Colonic mucosa (tissue), 4 donors: ENCODE measurements at regions of chr7 and their contacts with region 1.

Region 1: GRCh38 chr7:25389489-25390106 is 161.3 kb upstream of the NPVF start:
- DNase-seq: peak; percentile 60
- H3K4me3 ChIP-seq: no peak overlapping the region
- H3K27ac ChIP-seq: no peak overlapping the region
- H3K4me1 ChIP-seq: peaks cover 11% of the 10 kb centered on the region
- H3K27me3 ChIP-seq: no peaks in the 10 kb centered on the region
- CTCF ChIP-seq: peak; percentile 48

Region 2: DNA sequence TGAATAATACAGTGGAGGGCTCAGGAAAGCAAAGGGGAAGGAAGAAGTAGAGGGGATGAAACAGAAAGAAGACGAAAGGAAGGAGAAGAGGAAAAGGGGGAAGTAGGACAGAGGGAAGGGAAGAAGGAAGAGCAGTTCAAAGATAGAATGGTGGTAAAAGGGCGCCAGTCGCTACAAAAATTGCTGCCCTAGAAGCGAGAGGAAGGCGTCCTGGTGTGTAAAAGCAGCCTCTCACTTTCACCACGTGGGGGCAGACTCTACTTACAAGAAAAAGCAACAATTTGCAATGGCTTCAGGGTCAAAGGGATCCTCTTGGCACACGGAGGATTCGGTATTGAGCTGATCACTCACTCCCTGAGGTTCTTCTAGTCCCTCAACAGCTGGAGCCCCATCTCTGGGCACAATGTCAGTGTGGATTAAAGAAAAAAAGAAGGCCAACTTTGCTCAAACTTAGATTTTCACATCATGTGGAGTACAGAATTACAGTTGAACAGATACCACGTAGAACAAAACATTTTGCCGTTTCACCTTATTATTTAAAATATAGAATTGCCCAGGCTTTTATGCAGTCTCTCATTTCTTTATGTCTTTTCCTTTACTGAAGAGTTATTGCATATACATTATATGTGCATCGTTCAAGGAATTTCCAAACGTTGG is 129.9 kb before region 1 on chr7:
- intact Hi-C with region 1: loop called (anchors 1 kb)
- DNase-seq: peak; percentile 82
- H3K4me3 ChIP-seq: no peak overlapping the region
- H3K27ac ChIP-seq: no peak overlapping the region
- H3K4me1 ChIP-seq: peaks cover 9% of the 10 kb centered on the region
- H3K27me3 ChIP-seq: no peaks in the 10 kb centered on the region
- CTCF ChIP-seq: peak; percentile 86

Region 3: GRCh38 chr7:25314731-25315267 is 74.8 kb before region 1 on chr7:
- intact Hi-C with region 1: loop called (anchors 10 kb)
- DNase-seq: peak; percentile 59
- H3K4me3 ChIP-seq: no peak overlapping the region
- H3K27ac ChIP-seq: peak overlapping the region; percentile 75
- H3K4me1 ChIP-seq: no peaks in the 10 kb centered on the region
- H3K27me3 ChIP-seq: no peaks in the 10 kb centered on the region
- CTCF ChIP-seq: no peak

Region 4: DNA sequence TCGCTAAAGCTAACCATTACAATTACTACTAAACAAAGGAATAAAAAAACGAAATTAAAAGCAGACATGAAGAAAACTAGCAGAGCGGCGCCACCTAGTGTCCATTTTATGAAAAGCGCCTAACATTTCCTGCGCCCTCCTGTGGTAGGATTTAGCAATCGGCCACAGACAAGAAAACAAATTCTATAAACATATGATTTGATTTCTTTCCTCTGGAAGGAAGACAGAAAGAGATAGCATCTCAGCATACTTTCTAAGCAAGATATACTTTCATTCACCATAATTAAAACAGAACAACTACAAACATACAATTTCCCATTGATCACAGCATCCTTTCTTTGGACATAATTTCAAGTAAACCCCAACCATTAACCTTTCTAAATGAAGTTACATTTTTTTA is 176.4 kb after region 1 on chr7:
- intact Hi-C with region 1: loop called (anchors 2 kb)
- DNase-seq: peak; percentile 69
- H3K4me3 ChIP-seq: no peak overlapping the region
- H3K27ac ChIP-seq: no peak overlapping the region
- H3K4me1 ChIP-seq: no peaks in the 10 kb centered on the region
- H3K27me3 ChIP-seq: no peaks in the 10 kb centered on the region
- CTCF ChIP-seq: peak; percentile 100

Region 5: GRCh38 chr7:25851332-25852210 is 462.0 kb after region 1 on chr7:
- intact Hi-C with region 1: loop called (anchors 5 kb)
- DNase-seq: peak; percentile 95
- H3K4me3 ChIP-seq: peak overlapping the region; percentile 25
- H3K27ac ChIP-seq: peak overlapping the region; percentile 44
- H3K4me1 ChIP-seq: peaks cover 6% of the 10 kb centered on the region
- H3K27me3 ChIP-seq: peaks cover 8% of the 10 kb centered on the region
- CTCF ChIP-seq: peak; percentile 63

Region 6: DNA sequence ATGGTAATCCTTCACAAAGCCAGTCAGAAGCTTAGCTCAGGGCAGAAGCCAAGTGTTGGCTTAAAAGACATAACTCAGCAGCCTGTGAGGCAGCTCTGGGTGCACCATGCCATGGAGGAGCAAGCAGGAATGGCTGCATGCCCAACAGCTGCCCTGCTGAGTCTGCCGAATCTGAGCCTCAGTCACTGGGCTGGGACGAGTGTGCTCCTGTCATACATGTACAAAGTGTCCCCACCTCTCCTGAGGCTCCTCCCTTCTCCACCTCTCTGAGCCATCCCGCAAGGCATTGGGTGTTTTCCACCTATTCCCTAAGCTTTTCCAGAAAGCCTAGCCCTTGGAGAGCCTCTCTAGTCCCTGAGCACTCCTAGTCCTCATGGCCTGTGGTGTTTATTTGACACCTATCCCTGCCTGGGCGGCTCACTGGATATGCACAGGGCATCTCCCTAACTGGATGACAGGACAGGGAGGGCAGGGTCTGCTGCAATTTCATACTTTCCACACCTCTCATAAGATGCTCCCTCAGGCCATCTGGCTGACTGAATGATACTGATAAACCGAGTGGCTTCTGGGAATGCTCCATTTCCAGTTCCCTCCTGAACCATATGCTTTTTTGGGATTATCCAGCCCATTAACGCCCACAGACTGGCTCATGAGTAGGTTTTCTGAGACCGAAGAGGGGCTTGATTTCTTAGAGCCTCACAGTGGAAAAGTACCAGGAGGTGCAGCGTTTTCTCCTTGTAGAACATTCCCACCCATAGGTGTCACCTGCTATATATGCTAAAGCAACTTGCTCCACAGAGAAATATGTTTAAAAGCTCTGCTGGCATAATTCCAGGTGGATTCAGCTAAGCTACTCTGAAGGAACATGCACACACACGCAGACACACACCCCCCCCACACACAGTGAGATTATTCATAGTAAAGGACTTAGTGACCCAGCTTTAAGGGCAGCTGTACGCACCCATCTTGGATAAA is 1101.3 kb after region 1 on chr7:
- intact Hi-C with region 1: no loop called
- DNase-seq: no peak
- H3K4me3 ChIP-seq: no peak overlapping the region
- H3K27ac ChIP-seq: no peak overlapping the region
- H3K4me1 ChIP-seq: no peaks in the 10 kb centered on the region
- H3K27me3 ChIP-seq: no peaks in the 10 kb centered on the region
- CTCF ChIP-seq: no peak